Endothelial cell of umbilical vein (primary cell): ENCODE measurements at regions of chr6 and their contacts with region 1.

Region 1: DNA sequence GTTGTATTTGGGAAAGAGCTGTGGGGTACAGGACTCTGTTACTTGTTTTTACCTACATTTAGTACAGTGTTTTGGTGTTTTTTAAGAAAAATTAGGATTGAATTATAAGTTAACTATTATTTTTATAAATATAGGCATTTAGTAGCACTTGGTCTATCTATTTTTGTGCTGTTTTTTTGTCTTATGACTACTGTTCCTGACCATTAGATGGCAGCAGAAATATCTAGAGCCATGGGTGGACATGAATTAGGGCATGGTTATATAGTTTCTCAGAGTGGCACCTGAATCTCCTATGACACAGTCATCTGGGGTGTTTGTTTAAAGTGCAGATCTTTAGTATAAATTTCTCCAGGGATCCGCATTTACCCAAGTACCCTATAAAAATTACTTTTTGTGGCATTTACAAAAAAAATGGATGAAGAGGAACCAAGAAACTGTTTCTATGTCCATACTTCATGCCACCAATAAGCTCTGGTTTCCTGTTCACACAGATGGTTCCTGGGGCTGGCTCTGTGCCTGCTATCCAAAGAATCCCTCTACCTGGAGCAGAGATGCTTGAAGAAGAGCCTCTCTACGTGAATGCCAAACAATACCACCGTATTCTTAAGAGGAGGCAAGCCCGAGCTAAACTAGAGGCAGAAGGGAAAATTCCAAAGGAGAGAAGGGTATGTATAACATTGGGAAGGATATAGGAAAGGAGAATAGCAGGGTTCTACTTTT is 19.8 kb downstream of the NFYA start:
- DNase-seq: peak; percentile 36
- H3K4me3 ChIP-seq: no peak overlapping the region
- H3K27ac ChIP-seq: no peak overlapping the region
- H3K4me1 ChIP-seq: peaks cover 16% of the 10 kb centered on the region
- H3K27me3 ChIP-seq: no peaks in the 10 kb centered on the region
- CTCF ChIP-seq: peak; percentile 9 to 39
- POLR2A ChIP-seq: no peak

Region 2: GRCh38 chr6:41072676-41073623 is 19.6 kb before region 1 on chr6 and contains the start of gene NFYA:
- CTCF ChIA-PET with region 1: interaction called, 12 read pairs
- POLR2A ChIA-PET with region 1: no interaction called
- dilution Hi-C with region 1: no loop called
- intact Hi-C with region 1: loop called (anchors 1 kb)
- DNase-seq: peak; percentile 100
- H3K4me3 ChIP-seq: peak within 1 kb of the TSS; percentile 84 to 97 (median 90)
- H3K27ac ChIP-seq: peak within 1 kb of the TSS; percentile 98
- H3K4me1 ChIP-seq: peaks cover 21% of the 10 kb centered on the region
- H3K27me3 ChIP-seq: no peaks in the 10 kb centered on the region
- CTCF ChIP-seq: peak; percentile 11 to 29
- POLR2A ChIP-seq: peak; percentile 72
- total RNA-seq, gene NFYA: 29.0 and 30.9 TPM in 2 replicates